MCF 10A (cell line): ENCODE measurements at regions of chr5 and their contacts with region 1.

Region 1: GRCh38 chr5:133225671-133226152 is 173.9 kb downstream of the HSPA4 start:
- DNase-seq: peak; percentile 56
- H3K4me3 Mint-ChIP-seq: peak overlapping the region; percentile 23
- H3K27ac Mint-ChIP-seq: peak overlapping the region; percentile 69
- H3K4me1 Mint-ChIP-seq: peaks cover 52% of the 10 kb centered on the region
- H3K27me3 Mint-ChIP-seq: no peaks in the 10 kb centered on the region
- CTCF ChIP-seq: no peak

Region 2: GRCh38 chr5:133192716-133193115 is 33.0 kb before region 1 on chr5:
- CTCF ChIA-PET with region 1: interaction called, 3 read pairs
- POLR2A ChIA-PET with region 1: interaction called, 17 read pairs
- intact Hi-C with region 1: no loop called
- DNase-seq: no peak
- H3K4me3 Mint-ChIP-seq: no peak overlapping the region
- H3K27ac Mint-ChIP-seq: no peak overlapping the region
- H3K4me1 Mint-ChIP-seq: no peaks in the 10 kb centered on the region
- H3K27me3 Mint-ChIP-seq: no peaks in the 10 kb centered on the region
- CTCF ChIP-seq: no peak

Region 3: DNA sequence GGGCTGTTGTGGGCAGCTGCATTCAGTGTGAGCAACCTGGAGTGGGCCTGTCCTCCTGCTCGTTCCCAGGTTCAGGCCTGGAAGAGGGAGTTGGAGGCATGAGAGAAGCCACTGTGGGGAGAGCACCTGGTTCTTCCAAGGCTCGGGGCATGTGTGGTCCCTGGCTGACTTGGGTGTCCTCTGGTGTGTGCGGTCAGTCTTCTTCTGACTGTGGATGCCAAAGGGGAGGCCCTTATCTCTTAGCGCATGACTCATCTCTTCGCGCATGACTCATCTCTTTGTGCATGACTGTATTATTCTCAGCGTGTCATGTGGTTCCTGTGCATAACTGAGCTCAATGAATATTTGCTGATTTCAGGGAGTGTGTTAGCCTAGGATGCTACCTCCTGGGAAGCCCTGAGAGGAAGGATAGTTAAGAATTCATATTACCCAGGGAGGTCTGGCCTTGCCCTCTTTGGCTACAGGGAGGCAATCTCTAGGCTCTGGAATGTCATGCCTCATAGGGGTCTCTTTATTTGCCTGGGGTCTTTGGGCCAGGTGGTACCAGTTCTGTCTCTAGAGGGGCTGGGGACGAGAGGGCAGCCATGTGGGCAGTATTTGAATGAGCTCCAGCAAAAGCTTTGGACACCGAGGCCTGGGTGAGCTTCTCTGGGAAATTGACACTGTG is 14.8 kb after region 1 on chr5:
- CTCF ChIA-PET with region 1: interaction called, 4 read pairs
- POLR2A ChIA-PET with region 1: interaction called, 96 read pairs
- intact Hi-C with region 1: loop called (anchors 2 kb)
- DNase-seq: peak; percentile 99
- H3K4me3 Mint-ChIP-seq: no peak overlapping the region
- H3K27ac Mint-ChIP-seq: peak overlapping the region; percentile 32
- H3K4me1 Mint-ChIP-seq: peaks cover 27% of the 10 kb centered on the region
- H3K27me3 Mint-ChIP-seq: no peaks in the 10 kb centered on the region
- CTCF ChIP-seq: no peak

Region 4: DNA sequence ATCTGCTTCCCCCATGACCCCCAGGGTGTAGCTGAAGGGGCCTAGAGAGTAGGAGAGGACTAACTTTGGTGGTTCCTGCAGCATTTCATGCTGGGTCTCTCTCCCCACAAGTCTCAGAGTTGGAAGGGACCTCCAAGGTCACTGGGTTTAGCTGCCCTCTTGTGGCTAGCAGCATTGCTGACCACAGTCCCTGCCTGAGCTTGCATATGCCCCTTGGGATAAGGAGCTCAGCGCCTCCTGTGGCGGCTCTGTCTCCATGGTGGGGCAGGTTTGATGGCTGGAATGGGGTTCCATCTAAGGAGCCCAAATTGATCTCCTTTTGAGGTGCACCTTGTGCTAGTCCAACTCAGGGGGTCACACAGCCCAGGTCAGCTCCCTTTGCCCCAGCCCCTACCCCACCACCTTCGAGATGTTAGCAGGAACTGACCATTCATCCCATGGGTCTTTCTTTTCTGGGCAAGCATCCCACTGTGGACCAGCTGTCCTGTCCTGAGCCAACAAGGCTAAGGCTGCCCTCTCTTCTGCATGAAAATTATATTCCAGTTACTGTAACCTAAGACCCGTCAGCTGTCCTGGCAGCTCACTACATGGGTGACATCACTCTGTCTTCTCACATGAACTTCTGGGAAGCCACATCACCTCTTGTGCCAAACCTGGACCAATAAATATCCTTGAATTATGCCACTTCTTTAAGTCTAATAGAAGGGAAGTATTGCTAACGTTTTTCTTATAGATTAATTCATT is 22.3 kb after region 1 on chr5:
- CTCF ChIA-PET with region 1: interaction called, 4 read pairs
- POLR2A ChIA-PET with region 1: interaction called, 96 read pairs
- intact Hi-C with region 1: loop called (anchors 2 kb)
- DNase-seq: peak; percentile 75
- H3K4me3 Mint-ChIP-seq: no peak overlapping the region
- H3K27ac Mint-ChIP-seq: no peak overlapping the region
- H3K4me1 Mint-ChIP-seq: peaks cover 23% of the 10 kb centered on the region
- H3K27me3 Mint-ChIP-seq: no peaks in the 10 kb centered on the region
- CTCF ChIP-seq: peak; percentile 57